Left lung (tissue), 14 donors: ENCODE measurements at regions of chr4 and their contacts with region 1.

Region 1: DNA sequence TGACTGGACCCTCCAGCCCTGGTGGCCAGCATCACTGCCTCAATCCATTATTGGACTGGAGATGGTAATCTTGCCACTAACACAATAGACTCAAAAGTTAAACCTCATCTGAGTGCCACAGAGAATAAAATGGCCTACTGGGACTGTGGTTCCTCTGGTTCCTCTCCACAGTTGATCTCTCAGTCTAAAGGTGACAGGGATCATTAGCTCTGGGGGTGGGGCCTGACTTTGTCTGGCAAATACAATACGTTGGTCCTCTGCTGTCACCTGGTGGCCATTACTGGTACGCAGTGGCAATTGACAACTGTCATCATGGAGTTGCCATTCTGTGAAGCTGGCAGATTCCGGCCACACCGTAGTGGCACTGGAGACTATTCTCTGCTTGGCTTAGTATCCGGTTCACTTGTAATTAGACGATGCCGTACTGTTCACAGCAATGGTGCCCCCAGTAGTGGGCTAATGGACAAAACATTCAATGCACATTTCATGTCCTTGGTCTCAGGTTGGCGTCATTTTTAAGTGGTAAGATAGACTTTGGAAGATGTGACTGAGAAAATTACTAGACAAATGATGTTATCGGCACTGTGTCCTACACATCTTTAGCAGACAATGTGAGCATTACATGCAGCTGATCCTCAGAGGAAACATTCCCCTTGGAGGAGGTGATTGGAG is 6.7 kb downstream of the FGFBP2 start:
- DNase-seq: peak in 3 of 4 donors; percentile 20 to 78 (median 46)
- ATAC-seq: peak; percentile 99
- H3K4me3 ChIP-seq: no peak overlapping the region
- H3K27ac ChIP-seq: no peak overlapping the region
- H3K4me1 ChIP-seq: peaks cover 0 to 5% of the 10 kb centered on the region in 2 donors
- H3K27me3 ChIP-seq: peaks cover 0 to 12% of the 10 kb centered on the region in 2 donors
- CTCF ChIP-seq: peak; percentile 76 to 85

Region 2: GRCh38 chr4:15714646-15715435 is 241.5 kb before region 1 on chr4:
- intact Hi-C with region 1: no loop called
- DNase-seq: peak in 1 of 4 donors; percentile 56
- ATAC-seq: peak; percentile 33
- H3K4me3 ChIP-seq: no peak overlapping the region
- H3K27ac ChIP-seq: no peak overlapping the region
- H3K4me1 ChIP-seq: peaks cover 0 to 20% of the 10 kb centered on the region in 2 donors
- H3K27me3 ChIP-seq: no peaks in the 10 kb centered on the region
- CTCF ChIP-seq: no peak

Region 3: DNA sequence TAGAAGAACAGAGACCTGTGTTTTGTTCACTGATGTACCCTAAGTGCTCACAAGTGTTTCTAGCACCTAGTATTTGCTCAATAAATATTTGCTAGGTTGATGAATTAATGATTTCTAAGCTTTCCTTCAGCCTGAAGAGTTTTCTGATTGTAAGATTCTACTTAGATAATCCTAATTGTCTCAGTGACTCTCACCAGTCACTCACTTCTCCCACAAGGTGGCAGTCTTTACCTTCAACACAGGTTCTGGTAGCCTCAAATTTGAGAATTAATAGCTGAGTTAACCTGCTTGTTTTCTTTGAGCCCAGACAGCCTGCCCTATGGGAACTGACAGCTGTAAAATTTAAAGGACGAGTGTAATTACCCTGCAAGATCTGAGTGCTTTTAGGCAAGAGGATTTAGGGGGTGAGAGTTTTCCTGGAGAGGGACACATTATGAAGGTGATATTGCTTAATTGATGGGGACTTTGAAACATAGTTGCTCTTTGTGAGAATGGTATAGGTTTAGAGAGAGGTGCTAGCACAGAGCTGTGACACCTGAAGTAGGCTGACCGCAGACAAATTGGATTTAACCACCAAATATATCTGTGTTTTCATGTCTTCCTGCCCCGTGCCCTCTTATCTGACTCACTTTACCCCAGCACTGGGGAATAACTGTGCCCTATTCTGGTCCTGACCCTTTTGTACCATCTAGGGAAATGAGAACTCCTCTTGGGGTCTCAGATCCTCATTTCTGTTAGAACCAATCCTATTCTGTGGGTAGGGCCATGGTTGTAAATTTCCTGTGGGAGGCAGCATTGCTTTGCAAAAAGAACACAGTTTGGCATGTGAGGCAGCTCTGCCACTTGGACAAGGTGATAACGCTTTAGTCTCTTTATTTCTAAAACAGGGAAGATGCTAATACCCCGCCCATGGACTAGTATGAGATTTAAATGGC is 150.5 kb before region 1 on chr4:
- intact Hi-C with region 1: loop called in 1 of 2 experiments (anchors 2 kb)
- DNase-seq: peak in 2 of 4 donors; percentile 16 to 46
- ATAC-seq: peak; percentile 88
- H3K4me3 ChIP-seq: no peak overlapping the region
- H3K27ac ChIP-seq: no peak overlapping the region
- H3K4me1 ChIP-seq: peaks cover 0 to 20% of the 10 kb centered on the region in 2 donors
- H3K27me3 ChIP-seq: peaks cover 0 to 5% of the 10 kb centered on the region in 2 donors
- CTCF ChIP-seq: peak; percentile 58 to 64

Region 4: DNA sequence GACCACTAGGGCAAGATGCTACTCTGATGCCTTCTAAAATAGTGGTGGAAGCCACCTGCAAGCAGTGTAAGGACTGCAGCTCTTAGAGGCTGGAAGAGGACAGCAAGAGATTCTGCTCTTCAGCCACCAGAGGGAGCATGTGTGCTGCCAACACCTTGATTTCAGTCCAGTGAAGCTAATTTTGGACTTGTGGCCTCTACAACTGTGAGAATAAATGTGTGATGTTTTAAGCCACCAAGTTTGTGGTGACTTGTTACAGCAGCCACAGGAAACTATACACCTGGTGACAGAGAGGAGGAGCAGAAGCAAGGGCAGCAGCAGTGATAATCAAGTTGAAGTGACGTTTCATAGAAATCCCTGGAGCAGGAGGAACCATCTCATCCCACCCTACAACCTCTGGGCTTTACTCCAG is 73.6 kb before region 1 on chr4:
- intact Hi-C with region 1: loop called in 1 of 2 experiments (anchors 5 kb)
- DNase-seq: peak in 3 of 4 donors; percentile 44 to 77 (median 50)
- ATAC-seq: peak; percentile 98
- H3K4me3 ChIP-seq: no peak overlapping the region
- H3K27ac ChIP-seq: no peak overlapping the region
- H3K4me1 ChIP-seq: no peaks in the 10 kb centered on the region
- H3K27me3 ChIP-seq: no peaks in the 10 kb centered on the region
- CTCF ChIP-seq: peak; percentile 88 to 91